Tibial artery (tissue), 4 donors: ENCODE measurements at regions of chr19 and their contacts with region 1.

Region 1: DNA sequence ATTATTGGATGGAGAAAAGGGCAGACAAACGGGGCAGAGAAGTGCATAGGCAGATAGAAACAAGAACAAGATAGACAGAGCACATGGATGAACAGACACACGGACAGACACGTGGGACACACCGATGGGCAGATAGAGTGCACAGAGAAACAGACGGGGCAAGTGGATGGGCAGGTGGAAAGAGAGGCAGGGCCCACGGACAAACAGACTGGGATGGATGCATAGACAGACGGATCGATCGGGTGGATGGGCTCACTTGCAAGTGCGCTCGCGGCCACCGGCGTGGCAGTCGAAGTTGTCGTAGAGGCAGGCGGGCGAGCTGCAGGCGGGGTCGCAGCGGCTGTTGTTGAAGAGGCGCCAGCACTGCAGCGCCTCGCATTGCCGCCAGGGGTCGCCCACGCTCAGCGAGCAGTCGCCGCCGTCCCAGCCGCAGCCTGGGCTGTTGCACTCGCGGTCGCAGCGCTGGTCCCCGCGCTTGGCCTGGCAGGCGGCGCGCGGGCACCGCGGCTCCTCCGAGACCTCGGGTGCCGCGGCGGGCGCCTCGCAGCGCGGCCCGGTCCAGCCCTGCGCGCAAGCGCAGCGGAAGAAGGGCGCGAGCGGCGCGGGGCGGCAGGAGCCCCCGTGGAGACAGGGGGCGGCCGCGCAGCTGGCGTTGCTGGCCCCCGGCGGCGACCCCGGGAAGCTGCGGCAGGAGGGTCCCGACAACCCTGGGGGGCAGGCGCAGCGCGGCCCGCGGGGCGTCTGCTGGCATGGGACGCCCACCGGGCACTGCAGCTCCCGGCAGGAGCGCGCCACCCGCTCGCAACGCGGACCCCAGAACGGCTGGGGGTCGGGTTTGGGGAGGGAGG is 23.3 kb downstream of the NOTCH3 start:
- DNase-seq: peak; percentile 73 to 89
- H3K4me3 ChIP-seq: peak overlapping the region; percentile 12 to 30
- H3K27ac ChIP-seq: peak overlapping the region; percentile 73 to 78
- H3K4me1 ChIP-seq: peaks cover 0 to 48% (median 20%) of the 10 kb centered on the region in 4 donors
- H3K27me3 ChIP-seq: no peaks in the 10 kb centered on the region
- CTCF ChIP-seq: peak; percentile 97 to 100

Region 2: DNA sequence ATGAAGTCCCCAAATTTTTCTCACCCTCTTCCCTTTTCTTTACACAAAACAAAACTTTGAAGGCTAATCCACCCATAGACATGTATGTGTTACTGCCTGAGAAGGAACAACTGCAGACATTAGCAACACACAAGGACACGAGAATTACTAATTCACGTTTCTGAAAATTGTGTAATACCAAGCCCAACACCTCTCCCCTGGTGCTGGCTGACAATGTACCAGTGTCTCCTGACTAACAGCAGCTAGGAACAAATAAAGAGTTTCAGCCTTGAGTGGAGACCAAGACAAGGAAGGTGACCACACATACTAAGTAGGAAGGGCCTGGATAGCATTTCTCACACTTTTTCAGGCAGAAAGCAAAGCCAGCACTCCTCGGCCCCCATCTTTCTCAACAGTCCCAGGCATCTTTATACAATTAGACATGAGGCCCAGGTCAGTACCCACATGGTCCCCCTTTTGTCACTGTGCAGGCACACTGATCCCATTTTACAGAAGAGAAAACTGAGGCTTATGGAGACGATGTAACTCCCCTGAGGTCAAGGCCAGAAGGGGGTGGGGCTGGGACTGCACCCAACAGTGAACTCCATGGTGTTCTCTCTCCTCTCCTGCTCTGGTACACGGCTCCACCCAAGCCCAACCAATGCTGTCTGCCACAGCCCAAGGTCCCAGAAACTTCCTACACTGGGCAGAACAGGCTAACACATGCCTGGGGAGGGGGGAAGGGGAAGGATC is 146.2 kb after region 1 on chr19:
- intact Hi-C with region 1: no loop called
- DNase-seq: peak; percentile 64 to 86
- H3K4me3 ChIP-seq: no peak overlapping the region
- H3K27ac ChIP-seq: peak overlapping the region; percentile 69 to 71
- H3K4me1 ChIP-seq: peaks cover 0 to 100% (median 77%) of the 10 kb centered on the region in 4 donors
- H3K27me3 ChIP-seq: no peaks in the 10 kb centered on the region
- CTCF ChIP-seq: no peak

Region 3: DNA sequence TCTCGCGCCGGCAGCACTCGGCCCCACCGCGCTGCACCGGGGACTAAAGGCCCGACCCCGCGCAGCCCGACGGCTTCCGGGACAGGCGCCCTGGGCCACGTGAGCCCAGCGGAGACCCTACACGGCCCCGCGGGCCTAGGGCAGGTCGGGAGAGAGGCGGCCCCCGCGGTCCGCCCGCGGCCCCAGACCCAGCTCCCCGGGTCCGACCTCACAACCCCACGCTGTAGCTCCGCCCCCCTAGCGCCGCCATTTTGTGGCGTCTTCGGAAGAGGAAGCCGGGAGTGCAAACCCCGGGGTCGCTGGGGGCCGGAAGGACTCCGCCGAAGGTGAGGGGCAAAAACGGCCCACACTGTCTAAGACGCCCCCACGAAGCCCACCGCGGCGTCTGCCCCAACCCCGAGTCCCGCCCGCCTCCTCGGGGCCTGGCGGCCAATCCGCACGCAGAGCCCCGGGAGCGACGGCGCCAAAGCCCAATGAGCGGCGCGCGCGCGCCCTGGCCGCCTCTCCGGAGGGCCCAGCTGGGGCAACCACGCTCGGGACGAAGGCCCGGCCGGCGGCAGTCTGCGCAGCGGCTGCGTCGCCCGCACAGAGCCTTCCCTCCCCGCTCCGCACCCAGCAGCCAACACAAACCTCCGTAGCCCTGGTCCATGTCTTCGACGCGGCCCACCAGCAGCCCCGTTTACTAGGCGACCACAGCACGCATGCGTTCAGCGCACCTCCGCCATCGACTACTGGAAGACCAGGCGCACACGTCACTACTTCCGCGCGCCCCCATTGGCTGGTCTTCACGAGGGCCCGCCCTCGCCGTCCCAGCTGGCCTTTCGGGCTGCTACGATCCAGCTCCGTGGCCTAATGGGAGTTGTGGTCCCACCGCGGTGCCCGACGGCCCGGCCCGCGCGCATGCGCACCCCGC is 201.8 kb after region 1 on chr19 and contains the start of gene AKAP8:
- intact Hi-C with region 1: loop called (anchors 5 kb)
- DNase-seq: peak; percentile 97 to 99
- H3K4me3 ChIP-seq: peak within 1 kb of the TSS; percentile 72 to 87
- H3K27ac ChIP-seq: peak within 1 kb of the TSS; percentile 97
- H3K4me1 ChIP-seq: peaks cover 0 to 48% (median 47%) of the 10 kb centered on the region in 4 donors
- H3K27me3 ChIP-seq: no peaks in the 10 kb centered on the region
- CTCF ChIP-seq: no peak

Region 4: GRCh38 chr19:15432629-15433518 is 255.4 kb after region 1 on chr19:
- intact Hi-C with region 1: loop called (anchors 10 kb)
- DNase-seq: peak; percentile 86 to 94
- H3K4me3 ChIP-seq: peak overlapping the region; percentile 91
- H3K27ac ChIP-seq: peak overlapping the region; percentile 89 to 90
- H3K4me1 ChIP-seq: peaks cover 0 to 60% (median 42%) of the 10 kb centered on the region in 4 donors
- H3K27me3 ChIP-seq: no peaks in the 10 kb centered on the region
- CTCF ChIP-seq: no peak